ENCODE measurements at regions of chr2 and their contacts with region 1.

Region 1: DNA sequence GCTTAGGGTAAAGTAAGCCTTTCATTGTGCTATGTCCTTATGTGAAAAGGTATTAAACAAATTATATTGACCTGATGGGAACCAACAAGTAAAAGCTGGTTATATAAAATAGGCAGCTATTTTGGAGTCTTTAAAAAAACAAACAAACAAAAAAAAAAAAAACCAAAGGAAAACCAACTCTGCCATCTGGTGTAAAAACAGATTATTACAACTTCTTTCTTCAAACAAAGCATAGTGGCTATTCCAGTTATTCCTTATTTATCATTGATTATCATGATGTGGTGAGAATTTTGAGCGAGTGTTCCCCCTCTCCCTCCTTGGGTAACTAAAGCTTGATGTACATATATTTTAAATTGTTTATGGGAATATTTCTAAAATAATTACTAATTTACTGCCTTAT is 122.4 kb upstream of the FHL2 start:
- DNase-seq: no peak
- H3K4me3 ChIP-seq: no peak overlapping the region
- H3K27ac ChIP-seq: no peak overlapping the region
- H3K4me1 ChIP-seq: no peaks in the 10 kb centered on the region
- H3K27me3 ChIP-seq: no peaks in the 10 kb centered on the region
- CTCF ChIP-seq: peak; percentile 54 to 65 (median 58)
- POLR2A ChIP-seq: no peak

Region 2: GRCh38 chr2:105369747-105370690 is 151.2 kb before region 1 on chr2:
- intact Hi-C with region 1: loop called (anchors 5 kb)
- DNase-seq: peak; percentile 84 to 85
- H3K4me3 ChIP-seq: no peak overlapping the region
- H3K27ac ChIP-seq: no peak overlapping the region
- H3K4me1 ChIP-seq: peaks cover 0 to 2% of the 10 kb centered on the region in 2 donors
- H3K27me3 ChIP-seq: no peaks in the 10 kb centered on the region
- CTCF ChIP-seq: peak; percentile 90 to 94 (median 91)
- POLR2A ChIP-seq: no peak